Adrenal gland (tissue), 19 donors: ENCODE measurements at regions of chr2 and their contacts with region 1.

Region 1: DNA sequence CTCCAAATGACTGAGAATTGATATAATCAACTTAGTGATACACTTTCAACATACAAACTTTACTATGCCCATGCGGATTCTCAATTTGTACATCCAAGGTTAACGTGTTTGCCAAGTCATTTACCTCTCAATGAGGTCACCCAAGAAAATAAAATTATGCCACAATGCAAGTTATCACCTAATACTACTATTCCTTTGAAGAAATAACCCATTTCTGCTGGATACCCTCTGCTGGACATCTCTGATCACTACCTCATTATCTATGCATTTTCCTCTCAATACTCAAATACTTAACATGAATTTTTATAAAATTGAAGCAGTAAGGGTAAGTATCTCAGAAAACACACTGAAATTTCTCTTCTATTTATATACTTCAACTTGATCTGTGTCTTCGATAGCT is 12.7 kb downstream of the HNRNPLL start:
- DNase-seq: no peak
- H3K4me3 ChIP-seq: no peak overlapping the region
- H3K27ac ChIP-seq: no peak overlapping the region
- H3K4me1 ChIP-seq: peaks cover 17 to 79% of the 10 kb centered on the region in 2 donors
- H3K27me3 ChIP-seq: no peaks in the 10 kb centered on the region
- CTCF ChIP-seq: peak in 2 of 6 experiments; percentile 15 to 22
- POLR2A ChIP-seq: no peak

Region 2: GRCh38 chr2:38377050-38377828 is 212.8 kb before region 1 on chr2 and contains the start of gene ATL2:
- intact Hi-C with region 1: no loop called
- DNase-seq: peak; percentile 96 to 98 (median 97)
- H3K4me3 ChIP-seq: peak within 1 kb of the TSS; percentile 75 to 94 (median 80)
- H3K27ac ChIP-seq: peak within 1 kb of the TSS; percentile 84 to 100 (median 99)
- H3K4me1 ChIP-seq: peaks cover 18 to 37% of the 10 kb centered on the region in 2 donors
- H3K27me3 ChIP-seq: no peaks in the 10 kb centered on the region
- CTCF ChIP-seq: peak in 1 of 6 experiments; percentile 1
- POLR2A ChIP-seq: peak; percentile 87 to 96
- total RNA-seq, gene ATL2: 54.7 to 313 (median 75.6) TPM

Region 3: DNA sequence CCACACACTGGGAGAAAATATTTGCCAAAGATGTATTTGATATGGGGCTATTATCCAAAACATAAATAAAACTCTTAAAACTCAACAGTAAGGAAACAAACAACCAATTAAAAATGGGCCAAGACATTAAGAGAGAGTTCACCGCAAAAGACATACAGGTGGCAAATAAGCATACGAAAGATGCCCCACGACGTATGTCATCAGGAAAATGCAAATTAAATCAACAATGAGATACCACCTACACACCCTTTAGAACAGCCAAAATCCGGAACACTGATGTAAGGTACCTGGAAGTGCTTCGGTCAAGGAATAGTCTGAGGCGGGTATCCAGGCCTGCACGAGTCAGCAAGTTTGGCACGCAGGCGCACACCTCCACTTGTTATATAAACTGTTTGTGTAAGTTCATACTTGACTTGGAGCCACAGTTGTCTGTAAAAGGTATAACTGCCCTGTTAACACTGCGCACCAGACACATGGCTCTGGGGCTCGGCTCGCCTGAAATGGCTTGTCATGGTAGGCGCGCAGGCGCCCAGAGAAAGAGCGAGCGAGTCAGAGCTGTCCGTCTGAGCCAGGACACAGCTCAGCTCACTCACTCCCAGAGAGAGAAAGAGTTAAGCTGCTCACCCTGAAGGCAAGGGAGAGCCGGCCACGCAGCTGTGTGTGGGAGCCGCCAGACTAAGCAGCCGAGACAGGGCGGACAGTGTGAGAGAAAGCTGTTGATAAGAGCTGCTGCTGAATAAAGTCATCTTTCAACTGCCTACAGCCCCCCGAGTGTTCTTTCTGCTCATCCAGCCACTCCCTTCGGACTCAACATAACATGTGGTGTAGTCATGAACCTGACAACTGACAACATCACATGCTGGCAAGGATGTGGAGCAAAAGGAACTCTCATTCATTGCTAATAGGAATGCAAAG is 74.6 kb before region 1 on chr2:
- intact Hi-C with region 1: no loop called
- DNase-seq: peak; percentile 61 to 86 (median 77)
- H3K4me3 ChIP-seq: peak overlapping the region in 1 of 4 donors; percentile 25
- H3K27ac ChIP-seq: peak overlapping the region; percentile 51 to 94 (median 87)
- H3K4me1 ChIP-seq: peaks cover 0 to 11% of the 10 kb centered on the region in 2 donors
- H3K27me3 ChIP-seq: no peaks in the 10 kb centered on the region
- CTCF ChIP-seq: no peak
- POLR2A ChIP-seq: peak; percentile 21 to 65

Region 4: GRCh38 chr2:38709567-38710194 is 119.6 kb after region 1 on chr2:
- intact Hi-C with region 1: loop called in 1 of 2 experiments (anchors 10 kb)
- DNase-seq: no peak
- H3K4me3 ChIP-seq: no peak overlapping the region
- H3K27ac ChIP-seq: no peak overlapping the region
- H3K4me1 ChIP-seq: no peaks in the 10 kb centered on the region
- H3K27me3 ChIP-seq: no peaks in the 10 kb centered on the region
- CTCF ChIP-seq: no peak
- POLR2A ChIP-seq: no peak

Region 5: DNA sequence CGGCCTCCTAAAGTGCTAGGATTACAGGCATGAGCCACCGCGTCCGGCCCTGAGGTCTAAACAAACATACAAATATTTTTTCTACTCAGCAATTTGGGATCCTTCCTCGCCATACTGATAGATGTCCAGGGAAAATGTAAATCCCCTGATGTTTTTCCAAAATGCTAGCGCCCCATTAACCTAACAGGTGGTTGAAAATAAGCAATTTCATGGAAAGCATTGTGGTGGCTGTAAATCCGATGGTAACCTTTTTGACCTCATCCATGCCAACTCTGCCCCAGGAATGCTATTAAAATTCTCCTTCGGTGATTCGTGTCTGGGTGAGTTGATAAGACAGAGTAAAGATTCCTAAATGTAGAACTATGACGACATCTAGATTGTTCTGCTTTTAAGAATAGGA is 207.2 kb after region 1 on chr2:
- intact Hi-C with region 1: no loop called
- DNase-seq: no peak
- H3K4me3 ChIP-seq: no peak overlapping the region
- H3K27ac ChIP-seq: no peak overlapping the region
- H3K4me1 ChIP-seq: no peaks in the 10 kb centered on the region
- H3K27me3 ChIP-seq: no peaks in the 10 kb centered on the region
- CTCF ChIP-seq: no peak
- POLR2A ChIP-seq: no peak